ENCODE measurements at regions of chr16 and their contacts with region 1.

Region 1: DNA sequence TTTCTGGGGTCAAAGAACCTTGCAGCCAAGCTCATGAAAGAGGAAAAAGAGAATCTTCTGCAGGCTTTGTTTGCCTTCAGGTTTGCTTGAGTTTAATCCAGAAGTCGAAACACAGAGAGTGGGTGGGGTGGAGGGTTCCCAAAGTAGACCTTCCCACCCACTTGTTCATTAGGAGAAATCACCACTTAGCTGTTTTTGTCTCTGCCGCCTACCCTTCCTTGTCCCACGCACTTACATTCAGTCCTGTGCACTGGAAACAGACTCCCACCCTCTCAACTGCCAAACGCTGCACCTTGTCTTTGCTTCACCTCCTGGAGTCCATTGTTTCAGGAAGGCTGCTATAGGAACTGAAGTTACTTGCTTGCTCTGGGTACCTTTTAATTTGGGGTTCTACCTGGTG is 38.6 kb upstream of the RBFOX1 start:
- DNase-seq: no peak
- ATAC-seq: no peak
- H3K4me3 ChIP-seq: no peak overlapping the region
- H3K4me1 ChIP-seq: no peaks in the 10 kb centered on the region
- CTCF ChIP-seq: no peak

Region 2: DNA sequence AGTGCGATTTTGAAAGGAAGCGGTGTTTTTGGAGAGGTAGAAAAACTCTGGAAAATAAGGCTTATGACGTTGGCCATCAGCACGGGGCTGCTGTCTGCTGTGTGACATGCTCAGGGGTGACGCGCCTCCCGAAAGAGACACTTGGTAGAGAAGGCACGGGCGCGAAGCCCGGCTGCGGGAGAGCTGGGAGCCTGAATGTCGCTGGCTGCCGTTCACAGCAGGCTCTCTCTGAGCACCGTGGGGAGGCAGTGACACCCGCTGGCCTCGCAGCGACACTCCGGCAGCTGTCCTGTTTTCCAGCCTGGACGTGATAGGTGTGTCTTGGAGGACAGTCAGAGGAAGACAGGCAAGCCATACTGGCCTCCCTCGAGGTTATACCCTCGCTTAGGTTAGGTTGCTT is 720.4 kb before region 1 on chr16:
- intact Hi-C with region 1: no loop called
- DNase-seq: peak; percentile 36 to 48 (median 47)
- ATAC-seq: peak; percentile 83
- H3K4me3 ChIP-seq: no peak overlapping the region
- H3K4me1 ChIP-seq: no peaks in the 10 kb centered on the region
- CTCF ChIP-seq: no peak

Region 3: DNA sequence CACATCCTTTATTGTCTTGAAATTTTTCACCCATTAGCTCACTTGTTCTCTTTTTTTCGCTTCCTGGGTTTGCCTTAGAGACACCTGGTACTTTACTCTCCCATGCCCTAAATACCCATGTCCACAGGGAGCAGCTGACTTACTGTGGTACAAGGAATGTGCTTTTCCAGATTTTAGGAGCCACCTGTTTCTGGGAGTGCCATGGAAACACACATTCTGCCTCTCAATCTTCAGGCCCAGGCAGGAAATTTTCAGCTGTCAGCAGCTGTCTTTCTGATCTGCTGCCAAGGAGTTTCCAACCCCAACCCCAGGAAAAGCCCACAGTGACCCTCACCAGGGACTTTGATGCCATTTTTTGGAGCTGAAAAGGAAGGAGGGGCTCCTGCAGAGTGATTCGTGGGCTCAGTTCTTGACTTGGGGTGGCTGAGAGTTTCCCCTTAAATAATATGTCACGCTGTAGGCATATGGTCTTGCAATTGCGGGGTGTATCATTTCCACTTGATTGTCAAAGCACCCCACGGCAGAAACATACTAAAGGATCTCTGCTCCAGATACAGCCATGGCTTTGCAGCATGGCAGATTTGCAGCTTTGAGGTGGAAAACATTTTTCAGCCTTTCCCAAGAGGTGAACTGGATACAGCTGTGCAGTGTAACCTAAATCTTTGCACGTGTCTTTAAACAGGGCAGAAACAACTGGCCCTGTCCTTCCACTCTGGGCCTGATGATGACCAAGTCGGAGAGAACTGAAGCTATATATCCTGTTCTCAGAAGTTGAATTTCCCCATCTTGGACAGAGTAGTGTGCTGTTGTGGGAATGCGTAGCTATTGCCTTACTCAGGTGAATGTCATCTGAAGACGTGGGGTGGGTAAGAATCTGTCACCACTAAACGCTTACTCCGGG is 57.8 kb after region 1 on chr16:
- intact Hi-C with region 1: loop called in 1 of 2 experiments (anchors 10 kb)
- DNase-seq: no peak
- ATAC-seq: no peak
- H3K4me3 ChIP-seq: no peak overlapping the region
- H3K4me1 ChIP-seq: no peaks in the 10 kb centered on the region
- CTCF ChIP-seq: no peak